Right ventricle myocardium inferior (tissue), 1 donor: ENCODE measurements at regions of chr7 and their contacts with region 1.

Region 1: DNA sequence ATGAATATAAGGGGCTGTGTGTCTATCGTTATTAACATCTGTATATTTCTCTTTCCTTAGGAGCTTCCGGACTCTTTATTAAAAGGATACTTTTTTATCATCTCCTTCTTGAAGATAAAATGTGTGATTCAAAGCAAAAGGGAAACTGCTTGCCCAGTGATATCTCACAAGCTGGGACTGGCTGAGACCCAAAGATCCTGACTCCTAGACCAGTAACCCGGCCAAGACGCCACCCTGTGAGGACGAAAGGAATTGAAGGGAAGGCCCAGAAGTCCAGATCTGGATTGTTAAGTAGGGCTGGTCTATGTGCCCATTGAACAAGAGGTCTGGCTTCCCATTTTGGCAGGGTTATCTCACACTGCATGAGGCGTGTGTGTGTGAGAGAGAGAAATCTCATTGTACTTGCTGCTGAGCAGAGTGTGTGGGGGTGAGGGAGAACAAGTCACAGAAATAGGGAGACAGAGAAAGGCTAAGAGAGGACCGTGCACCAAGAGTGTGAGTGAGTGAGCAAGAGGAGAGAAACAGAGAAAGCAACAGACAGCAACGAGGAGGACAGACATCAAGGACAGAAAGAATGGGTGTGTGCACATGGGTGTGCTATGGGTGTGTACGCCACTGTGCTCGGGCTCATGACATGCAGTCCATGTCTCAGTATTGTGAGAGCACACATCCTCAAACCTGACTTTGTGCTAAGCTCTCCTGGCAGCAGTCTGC is 75.4 kb downstream of the PLXNA4 start:
- DNase-seq: peak; percentile 80
- ATAC-seq: peak; percentile 85

Region 2: DNA sequence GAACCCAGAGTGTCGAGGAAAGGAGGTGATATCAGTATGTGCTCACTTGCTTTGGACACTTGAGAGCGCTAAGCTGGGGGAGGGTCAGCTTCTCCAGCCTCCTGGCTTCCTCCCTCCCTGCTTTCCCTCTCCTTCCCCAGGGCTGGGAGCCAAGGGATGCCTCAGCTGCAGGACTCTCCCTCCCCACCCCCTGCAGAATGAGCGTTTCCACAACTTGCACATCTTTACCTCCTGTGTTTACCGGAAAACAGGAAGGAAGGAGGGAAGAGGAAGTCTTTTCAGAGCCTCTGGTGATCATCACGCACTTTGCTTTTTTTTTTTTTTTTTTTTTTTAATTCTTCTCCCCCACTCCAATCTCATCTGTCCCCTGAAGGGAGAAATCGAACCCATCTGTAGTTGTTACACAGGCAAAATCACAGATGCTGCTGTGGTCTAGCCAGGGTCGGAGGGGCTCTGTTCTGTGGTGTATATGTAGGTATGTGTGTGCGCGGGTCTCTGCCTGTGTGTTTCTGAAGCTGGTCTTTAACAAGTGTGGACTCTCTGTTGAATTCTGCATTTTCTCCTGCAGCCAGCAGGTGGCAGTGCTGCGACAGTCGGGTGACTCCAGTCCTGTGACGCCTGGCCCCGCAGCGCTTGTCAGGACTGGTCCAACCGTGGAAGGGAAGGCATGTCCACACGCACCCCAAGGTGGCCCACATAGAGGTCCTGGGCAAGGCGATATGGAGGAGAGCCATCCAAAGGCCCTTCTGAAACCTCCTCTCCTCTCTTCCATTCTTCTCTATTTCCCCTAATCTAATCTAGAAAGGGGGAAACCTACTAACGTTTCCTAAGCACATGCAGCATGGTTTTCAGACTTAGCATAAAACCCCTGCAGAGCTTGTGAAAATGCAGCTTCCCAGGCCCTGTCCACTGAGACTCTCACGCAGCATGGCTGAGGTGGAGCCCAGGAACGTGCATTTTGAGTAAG is 182.2 kb before region 1 on chr7:
- intact Hi-C with region 1: loop called (anchors 2 kb)
- DNase-seq: peak; percentile 90
- ATAC-seq: peak; percentile 91

Region 3: DNA sequence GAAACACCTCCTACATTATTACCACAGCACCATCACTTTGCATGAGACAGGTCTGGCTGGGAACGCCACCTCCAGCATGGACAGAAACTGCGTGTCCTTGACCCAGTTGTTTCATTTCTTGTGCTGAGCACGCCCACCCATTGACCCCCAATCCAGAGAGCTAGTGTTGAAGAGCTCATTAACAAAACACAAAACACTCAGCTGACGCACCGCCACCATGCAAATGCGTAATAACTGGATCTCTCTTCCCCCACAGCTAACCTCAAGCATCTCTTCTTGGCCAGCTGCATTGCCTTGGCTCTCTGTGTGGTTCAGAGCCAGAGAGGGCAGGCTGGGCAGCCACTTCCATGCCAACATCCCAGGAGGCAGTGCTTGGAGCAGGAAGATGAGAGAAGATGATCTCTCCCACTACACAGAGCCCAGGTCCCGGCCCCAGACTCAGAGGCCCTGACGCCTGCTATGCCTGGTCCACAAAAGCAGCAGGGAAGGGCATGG is 98.1 kb before region 1 on chr7:
- intact Hi-C with region 1: loop called (anchors 5 kb)
- DNase-seq: no peak
- ATAC-seq: peak; percentile 56

Region 4: DNA sequence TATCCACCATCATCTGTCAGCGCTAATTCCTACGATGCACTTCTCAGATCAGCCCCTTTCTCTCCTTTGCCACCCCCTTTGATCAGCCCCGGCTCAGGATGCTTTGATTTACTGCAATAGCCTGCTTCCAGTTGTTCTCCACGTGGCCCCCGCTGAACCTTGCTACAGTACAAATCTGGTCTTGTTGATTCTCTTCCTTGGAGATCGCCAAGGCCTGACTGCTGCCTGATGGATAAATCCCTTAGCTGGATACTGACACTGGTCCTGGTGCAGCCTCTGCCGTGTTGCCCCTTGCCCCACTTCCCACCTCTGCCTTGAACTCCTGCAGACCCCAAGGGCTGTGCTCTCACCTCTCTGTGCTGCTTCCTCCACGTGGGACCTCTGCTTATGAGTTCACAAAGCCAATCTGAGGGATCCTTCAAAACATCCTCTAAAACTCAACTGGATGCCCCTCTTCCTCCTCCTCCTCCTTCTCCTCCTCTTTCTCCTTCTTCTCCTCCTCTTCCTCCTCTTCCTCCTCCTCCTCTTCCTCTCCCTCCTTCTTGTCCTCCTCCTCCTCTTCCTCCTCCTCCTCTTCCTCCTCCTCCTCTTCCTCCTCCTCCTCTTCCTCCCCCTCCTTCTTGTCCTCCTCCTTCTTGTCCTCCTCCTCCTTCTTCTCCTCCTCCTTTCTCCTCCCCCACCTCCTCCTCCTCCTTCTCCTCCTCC is 60.1 kb after region 1 on chr7:
- intact Hi-C with region 1: no loop called
- DNase-seq: no peak
- ATAC-seq: no peak

Region 5: DNA sequence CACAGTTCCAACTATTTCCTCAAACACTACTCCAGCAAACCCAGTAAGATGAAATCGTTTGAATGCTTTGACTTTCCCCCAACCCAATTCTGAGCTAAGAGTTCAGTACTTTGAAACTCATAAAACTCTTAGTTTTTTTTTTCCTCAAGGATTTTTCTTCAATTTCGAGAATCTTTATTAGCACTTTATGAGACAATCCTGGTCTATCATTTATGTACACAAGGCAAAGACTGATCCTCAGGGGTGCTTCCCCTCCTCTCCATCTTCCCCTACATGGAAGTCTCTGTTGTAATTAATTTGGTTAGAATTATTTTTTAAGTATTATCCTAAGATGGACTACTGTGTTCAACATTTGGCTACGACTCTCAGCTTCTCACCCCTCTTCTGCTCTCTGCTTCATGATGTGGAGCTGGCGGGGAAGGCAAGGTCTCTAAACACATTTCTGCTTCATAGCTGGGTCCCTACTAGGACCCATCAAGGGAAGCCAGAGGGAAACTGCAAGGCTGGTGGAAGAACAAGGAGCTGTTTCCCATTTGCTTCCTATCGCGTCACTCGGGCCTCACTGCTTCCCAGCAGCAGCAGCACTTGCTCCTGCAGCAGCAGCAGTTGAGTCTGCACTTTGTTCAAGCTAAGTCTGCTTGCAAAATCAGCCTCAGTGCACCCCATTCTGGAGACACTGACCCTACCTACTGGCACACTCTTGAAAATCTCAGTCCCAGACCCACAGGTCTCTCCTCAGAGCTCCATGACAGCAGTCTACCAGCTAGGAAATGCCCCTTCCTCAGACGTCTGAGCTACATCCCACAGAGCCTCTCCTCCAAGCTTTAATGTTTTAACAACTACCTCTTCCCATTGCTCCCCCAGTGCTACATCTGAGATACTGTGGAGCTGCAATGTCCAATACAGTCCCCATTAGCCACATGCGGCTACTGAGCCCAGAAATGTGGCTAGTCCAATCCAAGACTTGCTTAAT is 491.0 kb after region 1 on chr7:
- intact Hi-C with region 1: no loop called
- DNase-seq: no peak
- ATAC-seq: no peak